Spleen (tissue), 13 donors: ENCODE measurements at regions of chr18 and their contacts with region 1.

Region 1: GRCh38 chr18:39375066-39375465 is 1809.5 kb upstream of the CELF4 start:
- DNase-seq: no peak
- H3K4me3 ChIP-seq: no peak overlapping the region
- H3K27ac ChIP-seq: no peak overlapping the region
- H3K4me1 ChIP-seq: no peaks in the 10 kb centered on the region
- H3K27me3 ChIP-seq: no peaks in the 10 kb centered on the region
- CTCF ChIP-seq: no peak
- POLR2A ChIP-seq: no peak

Region 2: GRCh38 chr18:38768504-38768903 is 606.6 kb before region 1 on chr18:
- intact Hi-C with region 1: loop called (anchors 10 kb)
- DNase-seq: no peak
- H3K4me3 ChIP-seq: no peak overlapping the region
- H3K27ac ChIP-seq: no peak overlapping the region
- H3K4me1 ChIP-seq: no peaks in the 10 kb centered on the region
- H3K27me3 ChIP-seq: no peaks in the 10 kb centered on the region
- CTCF ChIP-seq: no peak
- POLR2A ChIP-seq: no peak

Region 3: DNA sequence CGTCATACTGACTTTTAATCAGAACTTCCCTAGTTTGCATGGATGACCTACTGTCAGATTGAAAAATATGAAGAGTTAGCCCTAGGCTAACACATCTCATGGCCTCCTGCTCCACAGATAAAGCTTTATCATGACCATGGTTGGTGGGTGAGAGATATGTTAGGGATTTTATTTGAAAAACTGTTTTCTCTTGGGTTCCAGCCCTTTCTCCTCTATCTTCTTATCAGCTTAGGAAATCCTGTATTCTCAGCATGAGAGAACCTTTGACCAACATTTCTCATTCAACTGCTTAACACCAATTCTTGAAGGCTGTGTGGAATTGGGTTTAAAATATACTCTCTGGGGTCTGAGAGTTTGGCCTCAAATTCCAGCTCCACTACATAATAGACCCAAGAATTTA is 402.5 kb before region 1 on chr18:
- intact Hi-C with region 1: no loop called
- DNase-seq: no peak
- H3K4me3 ChIP-seq: no peak overlapping the region
- H3K27ac ChIP-seq: no peak overlapping the region
- H3K4me1 ChIP-seq: no peaks in the 10 kb centered on the region
- H3K27me3 ChIP-seq: no peaks in the 10 kb centered on the region
- CTCF ChIP-seq: no peak
- POLR2A ChIP-seq: no peak

Region 4: GRCh38 chr18:39513186-39513585 is 138.1 kb after region 1 on chr18:
- intact Hi-C with region 1: no loop called
- DNase-seq: no peak
- H3K4me3 ChIP-seq: no peak overlapping the region
- H3K27ac ChIP-seq: no peak overlapping the region
- H3K4me1 ChIP-seq: no peaks in the 10 kb centered on the region
- H3K27me3 ChIP-seq: no peaks in the 10 kb centered on the region
- CTCF ChIP-seq: no peak
- POLR2A ChIP-seq: no peak